ENCODE measurements at regions of chr12 and their contacts with region 1.

Region 1: GRCh38 chr12:46124848-46125619 is 134.7 kb upstream of the SCAF11 start:
- DNase-seq: no peak

Region 2: DNA sequence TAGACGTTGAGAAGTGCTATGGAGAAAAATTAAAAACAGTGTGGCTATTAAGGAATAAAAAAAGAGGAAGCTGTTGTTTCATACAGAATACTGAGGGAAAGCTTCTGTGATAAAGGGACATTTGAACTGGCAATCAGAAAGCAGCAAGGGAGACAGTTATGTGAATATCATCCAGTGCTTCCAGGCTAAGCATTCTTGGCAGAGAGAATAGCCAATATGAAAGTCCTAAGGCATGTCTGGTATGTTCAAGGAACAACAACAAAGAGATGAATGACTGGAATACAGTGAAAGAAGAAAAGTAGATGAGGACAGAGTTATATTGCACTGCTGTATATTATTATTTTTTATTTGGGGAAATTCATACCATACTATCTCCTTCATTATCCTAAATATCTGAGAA is 158.5 kb before region 1 on chr12:
- intact Hi-C with region 1: no loop called
- DNase-seq: no peak

Region 3: DNA sequence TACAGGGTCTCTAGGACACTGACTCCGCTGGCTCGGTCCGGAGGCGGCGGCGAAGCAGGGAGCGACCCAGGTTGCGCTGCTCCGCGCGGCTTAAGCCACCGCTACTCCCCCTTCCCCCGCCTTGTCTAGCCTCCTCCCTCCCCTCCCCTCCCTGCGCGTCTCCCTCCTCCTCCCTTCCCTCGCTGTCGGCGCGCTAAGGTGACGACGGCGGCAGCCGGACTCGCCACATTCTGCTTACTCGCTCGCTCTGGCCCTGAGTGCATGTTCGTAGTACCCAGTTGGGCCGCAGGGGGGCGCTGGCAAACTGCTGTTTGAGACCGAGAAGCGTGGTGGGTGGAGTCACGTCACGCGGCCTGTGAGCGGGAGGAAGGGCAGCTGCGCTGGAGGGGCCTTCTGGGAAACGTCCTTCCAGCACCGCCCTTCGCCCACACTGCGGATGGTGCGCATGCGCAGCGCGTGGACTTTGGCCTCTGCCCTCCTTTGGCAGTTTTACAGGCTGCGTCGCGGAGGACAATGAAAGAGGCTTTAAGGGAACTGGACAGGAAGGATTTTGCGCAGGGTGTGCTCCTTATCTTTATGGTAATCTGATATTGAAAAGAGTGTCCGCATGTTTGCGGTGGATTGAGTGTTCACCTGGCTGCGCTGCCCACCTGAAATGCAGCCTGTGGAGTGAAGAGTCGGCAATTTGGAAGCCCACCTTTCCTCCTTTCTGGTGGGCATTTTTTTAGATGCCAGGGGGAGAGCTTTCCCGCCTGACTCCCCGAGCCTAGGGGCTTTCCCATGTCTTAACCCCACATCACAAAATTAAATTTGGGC is 134.4 kb before region 1 on chr12 and contains the start of gene SCAF11:
- intact Hi-C with region 1: loop called (anchors 5 kb)
- DNase-seq: peak; percentile 100
- total RNA-seq, gene SCAF11: 109 TPM

Region 4: GRCh38 chr12:46303039-46303666 is 178.1 kb after region 1 on chr12:
- intact Hi-C with region 1: loop called (anchors 10 kb)
- DNase-seq: no peak

Region 5: GRCh38 chr12:46332260-46332659 is 207.2 kb after region 1 on chr12:
- intact Hi-C with region 1: no loop called
- DNase-seq: no peak

Region 6: GRCh38 chr12:46590991-46591703 is 466.1 kb after region 1 on chr12:
- intact Hi-C with region 1: no loop called
- DNase-seq: no peak

Region 7: DNA sequence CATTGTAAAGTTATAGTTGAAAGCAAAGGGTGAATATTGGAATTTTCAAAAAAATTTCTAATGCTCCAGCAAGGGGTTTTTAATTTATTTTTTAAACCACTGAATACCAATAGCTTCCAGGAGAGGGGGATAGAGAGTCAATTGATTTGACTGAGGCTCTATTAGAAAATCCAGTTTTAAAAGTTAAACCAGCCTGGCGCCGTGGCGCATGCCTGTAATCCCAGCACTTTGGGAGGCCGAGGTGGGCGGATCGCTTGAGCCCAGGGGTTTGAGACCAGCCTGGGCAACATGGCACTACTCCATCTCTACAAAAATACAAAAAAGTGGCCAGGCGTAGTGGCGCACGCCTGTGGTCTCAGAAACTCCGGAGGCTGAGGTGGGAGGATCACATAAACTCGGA is 550.7 kb after region 1 on chr12:
- intact Hi-C with region 1: loop called (anchors 10 kb)
- DNase-seq: no peak

Measured in cardiac septum (tissue), 1 donor.